ENCODE measurements at regions of chrX and their contacts with region 1.

Region 1: GRCh38 chrX:24371391-24371972 is 11.0 kb downstream of the SUPT20HL1 start:
- DNase-seq: peak; percentile 75
- ATAC-seq: peak; percentile 64
- H3K4me3 Mint-ChIP-seq: peak overlapping the region; percentile 35
- H3K27ac Mint-ChIP-seq: peak overlapping the region; percentile 58
- H3K4me1 Mint-ChIP-seq: peaks cover 26% of the 10 kb centered on the region
- H3K27me3 Mint-ChIP-seq: no peaks in the 10 kb centered on the region

Region 2: GRCh38 chrX:24259544-24260240 is 111.8 kb before region 1 on chrX:
- CTCF ChIA-PET with region 1: interaction called, 8 read pairs
- POLR2A ChIA-PET with region 1: no interaction called
- intact Hi-C with region 1: loop called in 1 of 2 experiments (anchors 2 kb)
- DNase-seq: peak; percentile 41
- ATAC-seq: peak; percentile 54
- H3K4me3 Mint-ChIP-seq: no peak overlapping the region
- H3K27ac Mint-ChIP-seq: peak overlapping the region; percentile 37
- H3K4me1 Mint-ChIP-seq: peaks cover 21% of the 10 kb centered on the region
- H3K27me3 Mint-ChIP-seq: no peaks in the 10 kb centered on the region

Region 3: DNA sequence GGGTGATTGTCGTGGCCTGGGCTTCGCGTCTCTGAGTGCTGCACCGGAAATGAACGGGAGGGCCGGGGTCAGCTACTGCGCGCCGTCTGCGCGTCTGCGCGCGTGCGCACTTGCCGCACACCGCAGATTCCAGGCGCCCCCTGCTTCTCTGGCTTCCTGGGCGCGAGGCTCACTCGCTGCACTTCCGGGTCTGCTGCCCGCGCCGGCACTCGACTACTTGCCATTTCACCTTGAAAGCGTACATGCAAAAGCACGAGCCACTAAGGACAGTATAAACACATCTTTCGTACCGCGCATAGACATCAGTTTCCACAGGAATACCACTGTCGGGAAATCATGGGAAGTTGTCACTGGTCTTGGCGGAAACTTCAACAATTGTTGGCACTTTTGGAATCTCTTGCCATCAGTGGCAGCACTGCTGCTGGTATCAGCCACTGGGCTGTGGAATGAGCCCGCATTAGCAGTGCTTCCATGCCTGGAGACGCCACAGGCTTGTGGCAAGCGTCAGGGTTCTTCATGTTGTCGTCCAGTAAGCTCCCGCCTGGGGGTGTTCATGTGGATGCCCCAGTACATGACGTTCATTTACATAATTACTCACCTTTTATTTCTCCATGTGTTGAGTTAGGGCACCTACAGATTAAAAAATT is 57.3 kb before region 1 on chrX and contains the start of gene SUPT20HL2:
- CTCF ChIA-PET with region 1: no interaction called
- POLR2A ChIA-PET with region 1: no interaction called
- intact Hi-C with region 1: no loop called
- DNase-seq: no peak
- ATAC-seq: no peak
- H3K4me3 Mint-ChIP-seq: no peak within 1 kb of the TSS
- H3K27ac Mint-ChIP-seq: no peak within 1 kb of the TSS
- H3K4me1 Mint-ChIP-seq: peaks cover under 1% of the 10 kb centered on the region
- H3K27me3 Mint-ChIP-seq: no peaks in the 10 kb centered on the region
- total RNA-seq, gene SUPT20HL2: not detected

Region 4: DNA sequence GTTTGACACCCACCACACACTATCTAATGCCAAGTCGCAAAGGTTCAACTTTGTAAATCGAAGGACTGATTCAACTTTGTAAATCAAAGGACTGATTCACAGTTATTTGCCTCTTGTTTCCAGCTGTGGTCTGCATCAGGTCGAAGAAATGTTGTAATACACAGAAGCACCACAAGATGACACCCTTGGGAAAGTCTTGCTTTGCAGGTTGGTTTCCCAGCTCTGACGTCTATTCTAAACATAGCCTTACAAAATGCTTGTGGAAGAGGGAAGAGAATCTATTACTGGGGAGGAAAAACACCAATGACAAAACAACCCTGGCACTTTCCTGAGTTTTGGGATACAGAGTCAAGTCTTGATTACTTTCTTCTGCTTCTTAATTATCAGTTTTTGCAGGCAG is 24.3 kb after region 1 on chrX:
- CTCF ChIA-PET with region 1: interaction called, 25 read pairs
- POLR2A ChIA-PET with region 1: no interaction called
- intact Hi-C with region 1: no loop called
- DNase-seq: peak; percentile 51
- ATAC-seq: peak; percentile 73
- H3K4me3 Mint-ChIP-seq: no peak overlapping the region
- H3K27ac Mint-ChIP-seq: no peak overlapping the region
- H3K4me1 Mint-ChIP-seq: peaks cover 3% of the 10 kb centered on the region
- H3K27me3 Mint-ChIP-seq: no peaks in the 10 kb centered on the region

Region 5: GRCh38 chrX:24561121-24561520 is 189.6 kb after region 1 on chrX:
- CTCF ChIA-PET with region 1: interaction called, 3 read pairs
- POLR2A ChIA-PET with region 1: no interaction called
- intact Hi-C with region 1: loop called in 1 of 2 experiments (anchors 2 kb)
- DNase-seq: no peak
- ATAC-seq: no peak
- H3K4me3 Mint-ChIP-seq: no peak overlapping the region
- H3K27ac Mint-ChIP-seq: no peak overlapping the region
- H3K4me1 Mint-ChIP-seq: no peaks in the 10 kb centered on the region
- H3K27me3 Mint-ChIP-seq: no peaks in the 10 kb centered on the region

Region 6: GRCh38 chrX:25020905-25021449 is 649.5 kb after region 1 on chrX:
- CTCF ChIA-PET with region 1: no interaction called
- POLR2A ChIA-PET with region 1: no interaction called
- intact Hi-C with region 1: loop called in 1 of 2 experiments (anchors 5 kb)
- DNase-seq: peak; percentile 60
- ATAC-seq: peak; percentile 60
- H3K4me3 Mint-ChIP-seq: no peak overlapping the region
- H3K27ac Mint-ChIP-seq: no peak overlapping the region
- H3K4me1 Mint-ChIP-seq: peaks cover 20% of the 10 kb centered on the region
- H3K27me3 Mint-ChIP-seq: peaks cover 50% of the 10 kb centered on the region